PC-9 (cell line): ENCODE measurements at regions of chr12 and their contacts with region 1.

Region 1: GRCh38 chr12:12582895-12583303 is 20.2 kb upstream of the DUSP16 start:
- DNase-seq: peak; percentile 60 to 99
- H3K4me3 ChIP-seq: peak overlapping the region; percentile 12; the same call in 1 of the 2 replicates
- H3K27ac ChIP-seq: peak overlapping the region; percentile 91
- H3K4me1 ChIP-seq: peaks cover 64% of the 10 kb centered on the region
- H3K27me3 ChIP-seq: no peaks in the 10 kb centered on the region
- CTCF ChIP-seq: no peak

Region 2: GRCh38 chr12:12555656-12556055 is 27.2 kb before region 1 on chr12:
- CTCF ChIA-PET with region 1: no interaction called
- POLR2A ChIA-PET with region 1: no interaction called
- intact Hi-C with region 1: no loop called
- DNase-seq: no peak
- H3K4me3 ChIP-seq: no peak overlapping the region
- H3K27ac ChIP-seq: no peak overlapping the region
- H3K4me1 ChIP-seq: peaks cover 15% of the 10 kb centered on the region
- H3K27me3 ChIP-seq: no peaks in the 10 kb centered on the region
- CTCF ChIP-seq: no peak

Region 3: DNA sequence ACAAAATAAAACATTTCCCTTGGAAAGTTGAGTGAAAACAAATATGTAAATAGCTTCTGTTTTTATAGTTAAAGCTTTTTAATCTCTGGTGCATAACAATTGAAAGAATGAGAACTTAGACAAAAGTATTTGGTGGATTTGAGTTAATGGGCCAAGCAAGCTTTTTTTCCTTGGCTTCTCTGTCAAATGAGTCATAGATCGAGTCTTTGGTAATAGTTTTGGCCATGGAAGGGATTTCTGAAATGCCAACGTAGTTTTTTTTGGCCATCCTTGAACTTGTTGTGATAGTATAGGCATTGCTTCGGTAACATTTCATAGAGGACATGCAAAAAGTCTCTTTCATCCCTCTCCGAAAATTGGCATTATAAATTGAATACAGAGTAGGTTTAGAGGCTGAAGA is 78.2 kb after region 1 on chr12:
- CTCF ChIA-PET with region 1: interaction called, 12 read pairs
- POLR2A ChIA-PET with region 1: no interaction called
- intact Hi-C with region 1: no loop called
- DNase-seq: no peak
- H3K4me3 ChIP-seq: no peak overlapping the region
- H3K27ac ChIP-seq: no peak overlapping the region
- H3K4me1 ChIP-seq: no peaks in the 10 kb centered on the region
- H3K27me3 ChIP-seq: no peaks in the 10 kb centered on the region
- CTCF ChIP-seq: no peak

Region 4: GRCh38 chr12:12764824-12765223 is 181.9 kb after region 1 on chr12:
- CTCF ChIA-PET with region 1: no interaction called
- POLR2A ChIA-PET with region 1: no interaction called
- intact Hi-C with region 1: no loop called
- DNase-seq: no peak
- H3K4me3 ChIP-seq: no peak overlapping the region
- H3K27ac ChIP-seq: no peak overlapping the region
- H3K4me1 ChIP-seq: no peaks in the 10 kb centered on the region
- H3K27me3 ChIP-seq: no peaks in the 10 kb centered on the region
- CTCF ChIP-seq: no peak

Region 5: DNA sequence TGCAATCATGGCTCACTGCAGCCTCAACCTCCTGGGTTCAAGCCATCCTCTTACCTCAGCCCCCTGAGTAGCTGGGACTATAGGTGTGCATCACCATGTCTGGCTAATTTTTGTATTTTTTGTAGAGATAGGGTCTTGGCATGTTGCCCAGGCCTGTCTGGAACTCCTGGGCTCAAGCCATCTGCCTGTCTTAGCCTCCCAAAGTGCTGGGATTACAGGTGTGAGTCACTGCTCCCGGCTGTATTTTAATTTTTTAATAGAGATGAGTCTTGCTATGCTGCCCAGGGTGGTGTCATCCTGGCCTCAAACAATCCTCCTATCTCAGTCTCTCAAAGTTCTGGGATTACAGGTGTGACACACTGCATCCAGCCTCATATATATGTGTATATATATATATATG is 276.8 kb after region 1 on chr12:
- CTCF ChIA-PET with region 1: no interaction called
- POLR2A ChIA-PET with region 1: no interaction called
- intact Hi-C with region 1: no loop called
- DNase-seq: no peak
- H3K4me3 ChIP-seq: no peak overlapping the region
- H3K27ac ChIP-seq: no peak overlapping the region
- H3K4me1 ChIP-seq: peaks cover 8% of the 10 kb centered on the region
- H3K27me3 ChIP-seq: no peaks in the 10 kb centered on the region
- CTCF ChIP-seq: no peak